ENCODE measurements at regions of chr13 and their contacts with region 1.

Region 1: DNA sequence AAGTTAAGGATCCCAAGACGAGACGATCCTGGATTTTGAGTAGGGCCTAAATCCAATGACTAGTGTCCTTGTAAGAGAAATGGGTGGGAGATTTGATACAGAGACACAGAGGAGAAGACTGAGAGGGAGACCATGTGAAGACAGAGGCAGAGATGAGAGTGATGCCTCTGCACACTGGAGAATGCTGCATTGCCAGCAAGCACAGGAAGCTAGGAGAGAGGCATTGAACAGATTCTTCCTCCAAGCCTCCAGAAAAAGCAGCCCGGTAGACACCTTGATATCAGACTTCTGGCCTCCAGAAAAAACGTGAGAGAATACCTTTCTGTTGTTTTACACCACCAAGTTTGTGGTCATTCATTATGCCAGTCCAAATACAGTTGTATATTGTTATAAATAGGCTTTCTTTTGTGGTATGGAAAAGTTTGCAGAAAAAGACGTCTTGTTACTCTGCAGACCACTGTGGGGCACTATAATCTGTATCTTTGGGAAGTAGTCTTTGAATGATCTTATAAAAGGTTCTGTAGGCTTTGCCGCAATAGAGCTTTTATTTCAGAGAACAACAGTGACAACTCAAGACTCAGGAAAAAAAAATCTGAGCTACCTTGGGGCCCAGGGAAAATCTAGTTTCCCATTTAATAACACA is 17.9 kb upstream of the RFC3 start:
- DNase-seq: no peak
- ATAC-seq: peak; percentile 33
- H3K4me3 Mint-ChIP-seq: no peak overlapping the region
- H3K27ac Mint-ChIP-seq: no peak overlapping the region
- H3K4me1 Mint-ChIP-seq: peaks cover 5% of the 10 kb centered on the region
- H3K27me3 Mint-ChIP-seq: peaks cover 8% of the 10 kb centered on the region

Region 2: GRCh38 chr13:34056733-34057258 is 256.7 kb after region 1 on chr13:
- CTCF ChIA-PET with region 1: no interaction called
- POLR2A ChIA-PET with region 1: no interaction called
- intact Hi-C with region 1: no loop called
- DNase-seq: no peak
- ATAC-seq: no peak
- H3K4me3 Mint-ChIP-seq: no peak overlapping the region
- H3K27ac Mint-ChIP-seq: no peak overlapping the region
- H3K4me1 Mint-ChIP-seq: no peaks in the 10 kb centered on the region
- H3K27me3 Mint-ChIP-seq: no peaks in the 10 kb centered on the region

Region 3: DNA sequence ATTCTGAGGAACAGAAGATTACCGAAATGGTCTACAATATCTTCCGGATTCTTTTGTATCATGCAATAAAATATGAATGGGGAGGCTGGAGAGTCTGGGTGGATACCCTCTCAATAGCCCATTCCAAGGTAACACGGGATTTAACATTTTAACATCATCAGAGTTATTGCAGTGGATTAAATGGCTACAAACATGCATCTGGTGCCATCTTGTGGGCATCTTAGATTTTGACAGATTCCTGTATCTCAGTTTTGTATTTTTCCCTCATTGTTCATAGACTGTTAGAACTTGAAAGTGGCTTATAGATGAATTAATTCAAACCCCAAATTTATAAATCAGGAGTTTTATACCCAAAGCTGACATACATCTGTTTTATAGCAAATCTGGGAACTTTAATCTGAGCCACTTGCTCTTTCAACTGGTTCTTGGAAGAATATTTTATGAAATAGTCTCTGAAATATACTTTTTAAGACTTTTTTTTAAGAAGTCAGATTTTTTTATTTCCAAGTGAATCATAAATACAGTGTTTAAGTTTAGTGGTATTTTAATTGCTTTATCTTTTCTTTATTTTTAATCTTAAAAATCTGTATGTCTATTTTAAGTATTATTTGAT is 1357.2 kb after region 1 on chr13:
- CTCF ChIA-PET with region 1: interaction called, 3 read pairs
- POLR2A ChIA-PET with region 1: no interaction called
- intact Hi-C with region 1: loop called (anchors 2 to 5 kb)
- DNase-seq: peak; percentile 47
- ATAC-seq: peak; percentile 39
- H3K4me3 Mint-ChIP-seq: no peak overlapping the region
- H3K27ac Mint-ChIP-seq: no peak overlapping the region
- H3K4me1 Mint-ChIP-seq: peaks cover 2% of the 10 kb centered on the region
- H3K27me3 Mint-ChIP-seq: no peaks in the 10 kb centered on the region

Measured in activated CD4-positive, alpha-beta T cell treated with anti-CD3 and anti-CD28 coated beads for 36 hours (primary cell).